ENCODE measurements at regions of chr17 and their contacts with region 1.

Region 1: DNA sequence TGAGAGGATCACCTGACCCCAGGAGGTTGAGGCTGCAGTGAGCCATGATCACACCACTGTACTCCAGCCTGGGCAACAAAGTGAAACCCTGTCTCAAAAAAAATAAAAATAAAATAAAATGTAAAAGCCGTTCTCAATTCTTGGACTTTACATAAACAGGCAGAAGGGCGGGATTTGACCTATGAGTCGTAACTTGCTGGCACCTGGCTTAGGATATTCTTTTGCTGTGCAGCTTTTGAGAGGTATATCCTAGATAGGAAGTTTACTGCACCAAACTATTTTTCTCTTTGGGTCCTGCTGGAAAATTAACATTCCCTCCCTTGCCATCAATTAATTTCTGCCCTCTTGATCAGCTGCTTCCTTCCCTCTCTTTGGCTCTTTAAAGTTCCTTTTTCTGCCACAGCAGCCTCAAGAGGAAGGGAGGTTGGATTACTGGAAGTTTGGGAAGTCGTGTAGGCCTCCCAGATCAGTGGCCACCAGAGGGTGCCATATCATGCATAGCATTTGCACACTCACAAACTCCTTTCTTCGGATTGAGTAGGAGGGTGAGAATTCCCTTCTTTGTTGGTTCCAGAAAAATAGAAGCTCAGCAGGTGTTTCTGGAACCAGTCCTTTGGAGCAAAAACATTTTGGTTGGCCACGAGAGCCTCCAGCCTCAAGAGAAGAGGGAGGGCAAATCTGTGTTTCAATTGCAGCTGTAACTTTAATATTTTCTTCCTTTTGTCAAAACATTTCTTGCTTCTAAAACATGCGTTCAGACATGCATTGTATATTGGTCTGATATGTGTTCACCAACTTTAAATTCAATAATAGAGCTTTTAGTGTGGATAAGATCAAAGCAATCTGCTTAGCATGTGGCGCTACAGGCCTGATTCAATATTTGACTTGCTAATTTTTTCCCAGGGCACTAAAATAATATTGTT is 147.3 kb downstream of the CCDC182 start:
- H3K4me3 ChIP-seq: no peak overlapping the region
- H3K27ac ChIP-seq: no peak overlapping the region
- H3K4me1 ChIP-seq: 0 out of 2 replicates have a peak, but pooled peaks cover 5% of the 10 kb centered on the region
- CTCF ChIP-seq: peak; percentile 75

Region 2: DNA sequence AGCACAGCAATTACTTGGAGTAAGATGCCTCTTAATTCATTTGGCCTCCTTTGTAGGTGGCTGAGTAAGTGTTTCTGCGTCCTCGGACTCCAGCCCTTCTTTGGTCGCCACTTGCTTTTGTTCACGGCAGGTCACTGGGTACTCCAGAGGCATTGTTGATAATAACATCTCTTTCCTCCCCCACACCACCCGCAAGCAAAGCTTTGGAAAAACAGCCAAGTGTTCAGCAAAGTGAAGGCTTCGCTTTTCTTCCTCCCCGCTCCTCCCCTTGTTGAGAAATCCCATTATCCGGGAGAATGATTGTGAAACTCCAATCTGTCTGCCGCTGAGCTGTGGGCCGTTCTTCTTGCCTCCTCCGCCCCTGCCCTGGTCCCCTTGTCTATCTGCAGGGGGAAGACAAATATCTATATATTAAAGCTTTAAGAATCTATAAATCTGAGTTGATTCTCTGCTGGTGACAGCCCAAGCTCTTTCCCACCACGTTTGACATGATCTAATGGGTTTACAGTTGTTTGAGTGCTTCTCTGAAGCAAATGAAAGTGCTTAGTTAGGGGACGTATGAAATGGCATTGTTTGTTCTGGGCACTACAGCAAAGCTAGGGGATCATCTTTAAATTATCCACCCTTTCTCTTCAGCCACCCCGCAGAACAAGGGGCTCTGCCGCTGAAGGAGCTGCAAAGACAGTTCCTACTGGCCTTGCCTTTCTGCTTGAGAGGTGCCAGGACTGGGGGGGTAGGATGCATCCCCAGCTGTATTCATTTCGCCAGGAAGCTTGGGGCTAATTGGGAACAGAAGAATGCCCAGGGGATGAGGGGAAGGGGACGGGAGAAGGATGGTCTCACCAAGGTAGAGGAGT is 19.8 kb before region 1 on chr17:
- CTCF ChIA-PET with region 1: interaction called, 38 read pairs
- POLR2A ChIA-PET with region 1: no interaction called
- H3K4me3 ChIP-seq: peak overlapping the region; percentile 12
- H3K27ac ChIP-seq: peak overlapping the region; percentile 91
- H3K4me1 ChIP-seq: peaks cover 35% of the 10 kb centered on the region
- CTCF ChIP-seq: no peak

Region 3: DNA sequence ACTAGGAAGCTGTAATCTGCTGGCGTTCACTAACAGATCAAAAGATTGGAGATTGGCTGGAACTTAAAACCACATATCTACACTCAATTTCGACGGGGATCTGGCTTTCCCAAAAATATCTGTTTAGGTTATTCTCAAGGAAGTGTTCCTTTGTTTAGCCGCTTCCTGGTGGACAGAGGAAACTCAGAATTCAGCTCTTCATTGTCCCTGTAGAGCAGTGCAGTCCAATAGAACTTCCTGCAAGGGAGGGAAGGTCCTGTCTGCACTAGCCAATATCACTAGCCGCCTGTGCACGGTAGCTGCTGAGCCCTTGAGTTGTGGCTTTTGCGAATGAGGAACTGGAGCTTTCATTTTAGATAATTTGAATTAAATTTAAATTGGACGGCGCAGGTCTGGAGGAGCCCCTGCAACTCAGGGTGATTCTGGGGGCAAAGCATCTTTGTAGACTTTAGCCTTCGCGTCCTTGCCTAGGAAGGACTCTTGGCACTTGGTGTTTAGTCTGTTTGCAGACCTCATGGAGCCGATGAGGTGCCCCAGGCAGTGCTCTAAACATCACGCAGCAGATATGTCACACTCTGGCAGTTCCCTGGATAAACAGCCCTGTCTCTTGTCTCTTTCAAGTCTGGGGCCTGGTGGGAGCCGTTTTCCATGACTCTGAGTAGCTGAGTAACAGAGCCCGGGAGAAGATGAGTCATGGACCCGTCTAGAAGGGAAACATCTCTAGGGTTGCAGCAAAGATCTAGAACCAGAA is 25.1 kb after region 1 on chr17:
- CTCF ChIA-PET with region 1: interaction called, 11 read pairs
- POLR2A ChIA-PET with region 1: no interaction called
- H3K4me3 ChIP-seq: no peak overlapping the region
- H3K27ac ChIP-seq: no peak overlapping the region
- H3K4me1 ChIP-seq: 0 out of 2 replicates have a peak, but pooled peaks cover 3% of the 10 kb centered on the region
- CTCF ChIP-seq: no peak

Region 4: GRCh38 chr17:57677301-57678257 is 79.8 kb after region 1 on chr17:
- CTCF ChIA-PET with region 1: interaction called, 80 read pairs
- POLR2A ChIA-PET with region 1: interaction called, 3 read pairs
- H3K4me3 ChIP-seq: no peak overlapping the region
- H3K27ac ChIP-seq: no peak overlapping the region
- H3K4me1 ChIP-seq: no peaks in the 10 kb centered on the region
- CTCF ChIP-seq: no peak

Region 5: GRCh38 chr17:57747221-57748017 is 149.6 kb after region 1 on chr17:
- CTCF ChIA-PET with region 1: interaction called, 24 read pairs
- POLR2A ChIA-PET with region 1: no interaction called
- H3K4me3 ChIP-seq: no peak overlapping the region
- H3K27ac ChIP-seq: no peak overlapping the region
- H3K4me1 ChIP-seq: no peaks in the 10 kb centered on the region
- CTCF ChIP-seq: peak; percentile 55; the same call in 1 of the 2 replicates

Measured in HEK293 (cell line).